ENCODE measurements at regions of chr5 and their contacts with region 1.

Region 1: GRCh38 chr5:10863763-10864383 is 102.8 kb upstream of the DAP start:
- DNase-seq: peak; percentile 37
- H3K4me3 ChIP-seq: no peak overlapping the region
- H3K27ac ChIP-seq: no peak overlapping the region
- H3K4me1 ChIP-seq: no peaks in the 10 kb centered on the region
- H3K27me3 ChIP-seq: peaks cover 3 to 8% of the 10 kb centered on the region in 2 experiments
- CTCF ChIP-seq: peak; percentile 90 to 94
- POLR2A ChIP-seq: no peak

Region 2: DNA sequence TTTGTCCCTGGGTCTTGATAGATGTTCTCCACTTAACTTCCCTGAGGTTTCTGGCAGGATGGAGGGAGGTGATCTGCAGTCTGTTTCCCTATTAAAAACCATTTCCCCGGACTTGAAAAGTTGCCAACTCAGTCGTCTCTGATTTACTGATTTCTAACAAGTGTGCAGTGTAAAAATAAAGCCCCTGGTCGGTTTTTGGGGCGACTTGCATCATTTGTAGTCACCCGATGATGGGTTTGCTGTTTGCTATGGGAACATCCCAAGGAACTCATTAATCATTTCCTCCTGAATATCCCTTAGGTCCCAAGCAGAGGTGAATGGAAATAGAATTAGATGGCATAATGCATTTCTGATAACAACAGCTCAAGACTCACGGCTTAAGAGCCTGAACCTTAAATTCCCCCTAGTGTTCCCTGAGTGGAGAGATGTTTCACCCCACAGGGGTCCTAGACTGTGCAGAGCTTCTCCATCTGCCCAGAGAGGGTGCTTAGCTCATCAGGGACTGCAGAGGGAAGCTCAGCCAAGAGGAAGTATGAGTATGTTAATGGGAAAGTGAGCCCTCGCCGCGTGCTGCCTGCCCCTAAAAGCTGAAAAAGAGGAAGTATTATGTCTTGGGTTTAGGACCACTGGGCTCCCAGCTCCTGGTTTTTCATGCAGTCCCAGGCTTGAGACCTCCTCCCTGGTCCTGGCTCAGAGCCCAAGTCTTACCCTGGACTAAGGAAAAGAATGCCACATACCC is 12.3 kb after region 1 on chr5:
- CTCF ChIA-PET with region 1: interaction called, 10 read pairs
- POLR2A ChIA-PET with region 1: no interaction called
- dilution Hi-C with region 1: no loop called
- intact Hi-C with region 1: no loop called
- DNase-seq: no peak
- H3K4me3 ChIP-seq: no peak overlapping the region
- H3K27ac ChIP-seq: no peak overlapping the region
- H3K4me1 ChIP-seq: no peaks in the 10 kb centered on the region
- H3K27me3 ChIP-seq: peaks cover 0 to 3% of the 10 kb centered on the region in 2 experiments
- CTCF ChIP-seq: no peak
- POLR2A ChIP-seq: no peak

Region 3: DNA sequence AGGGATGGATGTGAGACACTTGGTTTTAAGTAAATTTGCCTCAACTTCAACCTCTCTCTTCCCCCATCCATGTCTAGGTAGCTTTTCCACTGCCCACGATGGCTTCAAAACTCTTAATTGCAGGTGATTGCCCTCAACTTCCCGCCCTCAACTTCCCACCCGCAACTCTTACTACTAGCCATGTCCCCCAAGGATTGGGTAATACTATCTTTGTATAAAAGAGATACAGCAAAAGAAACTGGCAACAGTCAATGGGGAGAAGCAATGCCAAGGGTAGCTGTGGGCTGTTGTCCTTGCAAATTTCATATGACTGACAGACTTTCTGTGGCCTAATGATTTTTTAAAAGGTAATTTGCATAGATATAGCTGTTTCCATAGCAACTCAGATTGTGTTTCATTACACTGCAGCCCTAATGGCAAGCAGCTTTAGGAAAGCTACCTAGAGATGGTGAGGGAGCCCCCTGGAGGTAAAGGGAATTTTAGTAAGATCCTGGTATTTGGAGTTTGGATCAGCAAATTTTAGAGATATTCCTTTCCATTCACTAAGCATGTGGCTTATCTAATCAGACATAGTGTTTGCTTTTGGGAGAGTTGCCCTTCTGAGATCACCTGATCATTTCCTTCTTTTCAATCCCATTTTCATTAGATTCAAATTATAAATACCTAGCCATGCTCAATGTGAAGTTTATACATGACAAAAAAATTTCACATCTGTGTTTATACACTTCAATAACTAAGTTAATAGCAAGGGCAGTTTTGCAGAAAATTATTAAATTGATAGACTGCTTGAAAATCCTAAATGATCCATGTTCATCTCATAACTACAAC is 318.8 kb after region 1 on chr5:
- CTCF ChIA-PET with region 1: no interaction called
- POLR2A ChIA-PET with region 1: no interaction called
- dilution Hi-C with region 1: no loop called
- intact Hi-C with region 1: loop called (anchors 2 kb)
- DNase-seq: peak; percentile 20
- H3K4me3 ChIP-seq: no peak overlapping the region
- H3K27ac ChIP-seq: no peak overlapping the region
- H3K4me1 ChIP-seq: no peaks in the 10 kb centered on the region
- H3K27me3 ChIP-seq: no peaks in the 10 kb centered on the region
- CTCF ChIP-seq: peak; percentile 13 to 25
- POLR2A ChIP-seq: no peak

Region 4: GRCh38 chr5:11334401-11334800 is 470.5 kb after region 1 on chr5:
- CTCF ChIA-PET with region 1: no interaction called
- POLR2A ChIA-PET with region 1: no interaction called
- dilution Hi-C with region 1: no loop called
- intact Hi-C with region 1: no loop called
- DNase-seq: no peak
- H3K4me3 ChIP-seq: no peak overlapping the region
- H3K27ac ChIP-seq: no peak overlapping the region
- H3K4me1 ChIP-seq: no peaks in the 10 kb centered on the region
- H3K27me3 ChIP-seq: no peaks in the 10 kb centered on the region
- CTCF ChIP-seq: no peak
- POLR2A ChIP-seq: no peak

Region 5: DNA sequence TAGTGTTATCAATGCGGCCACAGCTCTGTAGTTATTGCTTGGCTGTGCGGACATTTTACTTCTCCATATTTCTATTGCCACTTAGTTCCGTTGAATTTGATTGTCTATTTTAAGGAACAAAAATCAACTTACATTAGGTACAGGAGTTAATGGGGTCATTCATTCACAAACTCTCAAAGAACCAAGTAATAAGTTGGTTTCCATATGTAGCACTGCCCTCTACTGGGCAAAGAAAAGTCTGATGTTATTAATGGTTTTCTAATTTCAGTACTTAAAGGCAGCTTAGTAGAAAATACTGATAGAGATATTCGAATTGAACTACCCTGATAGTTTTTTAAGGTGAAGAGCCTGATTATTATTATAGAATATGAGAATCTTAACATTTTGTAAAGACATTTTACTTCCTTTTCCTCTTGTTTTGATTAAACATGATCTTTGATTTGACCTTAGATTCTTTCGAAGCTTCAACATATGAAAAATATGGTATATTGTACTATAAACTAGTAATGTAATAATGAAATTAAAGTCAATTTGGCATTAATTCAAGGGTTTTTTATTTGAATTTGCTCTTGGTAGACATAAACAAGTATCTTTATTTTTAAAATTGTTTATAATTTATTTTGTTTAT is 1159.9 kb after region 1 on chr5:
- CTCF ChIA-PET with region 1: interaction called, 7 read pairs
- POLR2A ChIA-PET with region 1: no interaction called
- dilution Hi-C with region 1: no loop called
- intact Hi-C with region 1: loop called (anchors 2 kb)
- DNase-seq: peak; percentile 34
- H3K4me3 ChIP-seq: no peak overlapping the region
- H3K27ac ChIP-seq: no peak overlapping the region
- H3K4me1 ChIP-seq: no peaks in the 10 kb centered on the region
- H3K27me3 ChIP-seq: no peaks in the 10 kb centered on the region
- CTCF ChIP-seq: peak; percentile 25 to 28
- POLR2A ChIP-seq: no peak